Activated B cell treated with CpG ODN at 0.5 μM for 24 hours (primary cell): ENCODE measurements at regions of chr2 and their contacts with region 1.

Region 1: GRCh38 chr2:189952536-189953109 is 109.9 kb downstream of the MSTN start:
- DNase-seq: no peak
- ATAC-seq: peak; percentile 70
- H3K4me3 Mint-ChIP-seq: peak overlapping the region; percentile 54
- H3K27ac Mint-ChIP-seq: peak overlapping the region; percentile 80
- H3K4me1 Mint-ChIP-seq: peaks cover 33% of the 10 kb centered on the region
- H3K27me3 Mint-ChIP-seq: no peaks in the 10 kb centered on the region
- CTCF ChIP-seq: no peak

Region 2: DNA sequence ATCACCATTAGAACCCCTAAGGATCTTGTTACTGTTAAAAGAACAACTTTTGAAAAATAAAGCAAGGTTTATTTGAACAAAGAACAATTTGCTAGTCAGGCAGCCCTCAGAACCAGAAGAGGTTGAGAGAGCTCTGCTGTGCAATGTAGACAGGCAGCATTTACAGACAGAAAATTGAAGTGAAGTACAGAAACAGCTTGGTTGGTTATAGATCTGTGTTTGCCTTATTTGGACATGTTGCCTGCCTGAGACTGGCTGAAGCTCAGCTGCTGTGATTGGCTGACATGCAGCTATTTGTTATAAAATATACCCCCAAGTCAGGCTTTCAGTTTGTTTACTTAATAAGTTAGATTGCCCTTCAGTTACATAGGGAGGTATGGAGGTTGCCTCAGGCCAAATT is 97.4 kb after region 1 on chr2:
- CTCF ChIA-PET with region 1: no interaction called
- POLR2A ChIA-PET with region 1: interaction called, 11 read pairs
- intact Hi-C with region 1: no loop called
- DNase-seq: no peak
- ATAC-seq: no peak
- H3K4me3 Mint-ChIP-seq: no peak overlapping the region
- H3K27ac Mint-ChIP-seq: no peak overlapping the region
- H3K4me1 Mint-ChIP-seq: no peaks in the 10 kb centered on the region
- H3K27me3 Mint-ChIP-seq: no peaks in the 10 kb centered on the region
- CTCF ChIP-seq: no peak

Region 3: DNA sequence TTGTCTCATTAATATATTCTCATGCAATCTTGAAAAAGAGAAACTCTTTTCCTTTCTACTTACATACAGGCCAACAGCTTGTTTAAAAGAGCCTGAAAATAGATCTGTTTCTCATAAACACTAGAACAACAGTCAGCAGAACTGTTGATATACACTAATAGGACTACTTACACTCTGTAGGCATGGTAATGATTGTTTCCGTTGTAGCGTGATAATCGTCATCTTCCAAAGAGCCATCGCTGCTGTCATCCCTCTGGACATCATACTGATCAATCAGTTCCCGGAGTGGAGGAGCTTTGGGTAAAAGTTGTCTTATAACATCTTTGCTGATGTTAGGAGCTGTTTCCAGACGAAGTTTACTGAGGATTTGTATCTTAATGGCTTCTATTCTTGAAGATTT is 109.4 kb after region 1 on chr2:
- CTCF ChIA-PET with region 1: no interaction called
- POLR2A ChIA-PET with region 1: no interaction called
- intact Hi-C with region 1: no loop called
- DNase-seq: no peak
- ATAC-seq: no peak
- H3K4me3 Mint-ChIP-seq: no peak overlapping the region
- H3K27ac Mint-ChIP-seq: no peak overlapping the region
- H3K4me1 Mint-ChIP-seq: no peaks in the 10 kb centered on the region
- H3K27me3 Mint-ChIP-seq: no peaks in the 10 kb centered on the region
- CTCF ChIP-seq: no peak